ENCODE measurements at regions of chr5 and their contacts with region 1.

Region 1: GRCh38 chr5:64784451-64785025 is 15.8 kb downstream of the CWC27 start:
- DNase-seq: peak; percentile 83
- ATAC-seq: peak; percentile 82
- H3K4me3 Mint-ChIP-seq: no peak overlapping the region
- H3K27ac Mint-ChIP-seq: no peak overlapping the region
- H3K4me1 Mint-ChIP-seq: peaks cover 8% of the 10 kb centered on the region
- H3K27me3 Mint-ChIP-seq: no peaks in the 10 kb centered on the region

Region 2: GRCh38 chr5:64634997-64635686 is 149.4 kb before region 1 on chr5:
- CTCF ChIA-PET with region 1: interaction called, 46 read pairs
- POLR2A ChIA-PET with region 1: no interaction called
- DNase-seq: no peak
- ATAC-seq: no peak
- H3K4me3 Mint-ChIP-seq: no peak overlapping the region
- H3K27ac Mint-ChIP-seq: no peak overlapping the region
- H3K4me1 Mint-ChIP-seq: peaks cover 6% of the 10 kb centered on the region
- H3K27me3 Mint-ChIP-seq: peaks cover 30% of the 10 kb centered on the region

Region 3: GRCh38 chr5:64768358-64769312 is 15.9 kb before region 1 on chr5 and contains the starts of genes CWC27 and SREK1IP1:
- CTCF ChIA-PET with region 1: interaction called, 12 read pairs
- POLR2A ChIA-PET with region 1: interaction called, 3 read pairs
- DNase-seq: peak; percentile 89
- ATAC-seq: peak; percentile 98
- H3K4me3 Mint-ChIP-seq: peak within 1 kb of the TSS; percentile 90
- H3K27ac Mint-ChIP-seq: peak within 1 kb of the TSS; percentile 91
- H3K4me1 Mint-ChIP-seq: peaks cover 41% of the 10 kb centered on the region
- H3K27me3 Mint-ChIP-seq: no peaks in the 10 kb centered on the region
- total RNA-seq, gene CWC27: 23.2 to 23.7 TPM
- total RNA-seq, gene SREK1IP1: 19.4 to 21.8 TPM

Region 4: DNA sequence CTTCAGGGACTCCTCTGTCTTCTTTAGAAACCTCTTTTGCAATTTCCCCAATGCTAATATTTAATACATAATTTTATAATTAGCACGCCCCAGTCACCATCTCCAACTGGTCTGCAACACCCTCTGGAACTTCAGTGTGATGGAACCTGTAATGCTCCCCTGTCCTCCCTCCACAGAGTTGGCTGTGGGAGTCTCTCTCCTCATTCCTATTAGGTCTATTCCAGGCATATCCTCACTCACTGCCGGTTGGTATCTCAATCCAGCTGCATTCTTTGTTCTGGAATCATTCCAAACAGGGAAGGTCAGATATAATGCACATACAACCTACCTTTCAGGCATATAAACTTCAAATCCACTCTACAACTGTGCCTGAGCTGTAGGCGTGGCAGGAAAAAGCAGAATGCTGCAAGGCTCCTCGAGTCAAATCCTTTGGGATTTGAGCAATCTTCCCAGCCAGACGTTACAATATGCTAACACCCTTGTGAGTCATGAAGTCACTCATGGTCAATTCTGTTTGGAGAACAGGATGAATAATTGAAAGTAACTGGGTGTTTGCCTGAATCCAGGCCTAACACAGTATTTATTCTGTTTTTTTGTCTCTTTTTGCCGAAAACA is 278.0 kb after region 1 on chr5:
- CTCF ChIA-PET with region 1: no interaction called
- POLR2A ChIA-PET with region 1: no interaction called
- DNase-seq: no peak
- ATAC-seq: no peak
- H3K4me3 Mint-ChIP-seq: no peak overlapping the region
- H3K27ac Mint-ChIP-seq: no peak overlapping the region
- H3K4me1 Mint-ChIP-seq: no peaks in the 10 kb centered on the region
- H3K27me3 Mint-ChIP-seq: peaks cover 15% of the 10 kb centered on the region

Measured in activated CD8-positive, alpha-beta T cell treated with anti-CD3 and anti-CD28 coated beads, Interleukin-2, amount 10 ng/mL, durations not matched to agents 7 days and 5 days (primary cell).